ENCODE measurements at regions of chr9 and their contacts with region 1.

Region 1: GRCh38 chr9:16030513-16031185 is 477.8 kb downstream of the CCDC171 start:
- DNase-seq: peak; percentile 79 to 85
- H3K4me3 ChIP-seq: no peak overlapping the region
- H3K27ac ChIP-seq: peak overlapping the region; percentile 77
- H3K4me1 ChIP-seq: peaks cover 12% of the 10 kb centered on the region
- H3K27me3 ChIP-seq: no peaks in the 10 kb centered on the region
- CTCF ChIP-seq: no peak

Region 2: GRCh38 chr9:15357050-15357653 is 673.5 kb before region 1 on chr9:
- CTCF ChIA-PET with region 1: no interaction called
- POLR2A ChIA-PET with region 1: no interaction called
- intact Hi-C with region 1: no loop called
- DNase-seq: peak in 1 of 2 experiments; percentile 45
- H3K4me3 ChIP-seq: no peak overlapping the region
- H3K27ac ChIP-seq: no peak overlapping the region
- H3K4me1 ChIP-seq: peaks cover 9% of the 10 kb centered on the region
- H3K27me3 ChIP-seq: no peaks in the 10 kb centered on the region
- CTCF ChIP-seq: no peak

Region 3: DNA sequence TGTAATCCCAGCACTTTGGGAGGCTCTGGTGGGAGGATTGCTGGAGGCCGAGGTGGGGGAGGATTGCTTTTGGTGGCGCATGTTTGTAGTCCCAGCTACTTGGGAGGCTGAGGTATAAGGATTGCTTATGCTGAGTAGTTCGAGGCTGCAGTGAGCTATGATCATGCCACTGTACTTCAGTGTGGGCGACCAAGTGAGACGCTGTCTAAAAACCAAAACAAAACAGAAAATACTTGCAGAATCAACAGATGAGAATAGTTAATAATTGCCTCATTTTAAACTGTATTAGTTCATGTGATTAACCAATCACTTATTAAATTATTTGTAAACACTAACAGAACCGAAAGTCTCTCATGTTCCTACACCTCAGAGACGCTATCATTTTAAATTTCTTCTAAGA is 359.8 kb before region 1 on chr9:
- CTCF ChIA-PET with region 1: no interaction called
- POLR2A ChIA-PET with region 1: no interaction called
- intact Hi-C with region 1: no loop called
- DNase-seq: no peak
- H3K4me3 ChIP-seq: no peak overlapping the region
- H3K27ac ChIP-seq: no peak overlapping the region
- H3K4me1 ChIP-seq: no peaks in the 10 kb centered on the region
- H3K27me3 ChIP-seq: no peaks in the 10 kb centered on the region
- CTCF ChIP-seq: no peak

Region 4: GRCh38 chr9:17793713-17794622 is 1763.3 kb after region 1 on chr9:
- CTCF ChIA-PET with region 1: no interaction called
- POLR2A ChIA-PET with region 1: no interaction called
- intact Hi-C with region 1: loop called (anchors 10 kb)
- DNase-seq: peak in 1 of 2 experiments; percentile 1
- H3K4me3 ChIP-seq: no peak overlapping the region
- H3K27ac ChIP-seq: no peak overlapping the region
- H3K4me1 ChIP-seq: no peaks in the 10 kb centered on the region
- H3K27me3 ChIP-seq: no peaks in the 10 kb centered on the region
- CTCF ChIP-seq: 0 out of 2 replicates have a peak, but pooled peaks have one; percentile 25

Measured in PC-9 (cell line).